CD4-positive, alpha-beta memory T cell (primary cell): ENCODE measurements at regions of chr12 and their contacts with region 1.

Region 1: GRCh38 chr12:64392221-64392620 is 1.7 kb upstream of the C12orf56 start:
- DNase-seq: peak in 2 of 5 donors; percentile 26 to 29
- H3K4me3 ChIP-seq: no peak overlapping the region
- H3K4me3 Mint-ChIP-seq: peak overlapping the region in 4 of 8 donors; percentile 20 to 62 (median 42)
- H3K27ac ChIP-seq: no peak overlapping the region
- H3K27ac Mint-ChIP-seq: no peak overlapping the region
- H3K4me1 ChIP-seq: peaks cover 14% of the 10 kb centered on the region
- H3K4me1 Mint-ChIP-seq: peaks cover 6 to 14% (median 11%) of the 10 kb centered on the region in 4 donors
- H3K27me3 ChIP-seq: no peaks in the 10 kb centered on the region
- H3K27me3 Mint-ChIP-seq: no peaks in the 10 kb centered on the region

Region 2: DNA sequence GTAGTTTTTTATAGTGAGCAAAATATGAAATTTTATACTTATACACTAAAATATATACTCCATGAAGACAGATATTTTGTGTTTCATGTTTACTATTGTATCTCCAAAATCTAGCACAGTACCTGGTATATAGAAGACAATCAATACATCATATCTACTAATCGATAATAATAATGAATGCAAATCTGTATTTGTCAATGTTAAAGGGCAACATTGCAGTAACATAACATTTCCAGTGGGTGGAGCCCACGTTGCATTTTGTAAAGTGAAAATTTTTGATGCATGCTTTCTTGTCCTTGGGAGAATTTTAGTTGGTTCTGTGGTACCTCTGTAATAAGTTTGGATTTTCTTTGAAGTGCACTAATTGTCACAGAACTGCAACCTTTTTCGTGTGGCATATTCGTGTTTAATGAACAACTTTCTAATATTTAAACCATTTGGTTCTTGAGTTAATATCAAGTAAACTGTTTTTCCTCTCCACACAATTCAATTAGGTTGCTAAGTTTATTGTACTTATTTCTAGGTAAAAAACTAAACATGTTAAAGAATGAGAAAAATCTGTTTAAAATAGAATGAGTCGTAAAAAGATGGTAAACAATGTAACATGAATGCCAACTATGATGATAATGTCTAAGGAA is 1288.6 kb before region 1 on chr12:
- CTCF ChIA-PET with region 1: no interaction called
- POLR2A ChIA-PET with region 1: no interaction called
- intact Hi-C with region 1: loop called (anchors 10 kb)
- DNase-seq: peak in 3 of 5 donors; percentile 2 to 11 (median 6)
- H3K4me3 ChIP-seq: no peak overlapping the region
- H3K4me3 Mint-ChIP-seq: no peak overlapping the region
- H3K27ac ChIP-seq: no peak overlapping the region
- H3K27ac Mint-ChIP-seq: no peak overlapping the region
- H3K4me1 ChIP-seq: no peaks in the 10 kb centered on the region
- H3K4me1 Mint-ChIP-seq: no peaks in the 10 kb centered on the region
- H3K27me3 ChIP-seq: no peaks in the 10 kb centered on the region
- H3K27me3 Mint-ChIP-seq: no peaks in the 10 kb centered on the region

Region 3: GRCh38 chr12:63843721-63844390 is 548.4 kb before region 1 on chr12:
- CTCF ChIA-PET with region 1: interaction called, 3 read pairs
- POLR2A ChIA-PET with region 1: no interaction called
- intact Hi-C with region 1: loop called (anchors 1 kb)
- DNase-seq: peak; percentile 61 to 76 (median 73)
- H3K4me3 ChIP-seq: peak overlapping the region; percentile 49 to 66
- H3K4me3 Mint-ChIP-seq: peak overlapping the region in 7 of 8 donors; percentile 35 to 81 (median 67)
- H3K27ac ChIP-seq: no peak overlapping the region
- H3K27ac Mint-ChIP-seq: no peak overlapping the region
- H3K4me1 ChIP-seq: peaks cover 15% of the 10 kb centered on the region
- H3K4me1 Mint-ChIP-seq: peaks cover 7 to 13% (median 10%) of the 10 kb centered on the region in 4 donors
- H3K27me3 ChIP-seq: no peaks in the 10 kb centered on the region
- H3K27me3 Mint-ChIP-seq: peaks cover 14 to 26% of the 10 kb centered on the region in 2 donors

Region 4: GRCh38 chr12:64273527-64274403 is 118.5 kb before region 1 on chr12:
- CTCF ChIA-PET with region 1: interaction called, 6 read pairs
- POLR2A ChIA-PET with region 1: no interaction called
- intact Hi-C with region 1: loop called (anchors 1 kb)
- DNase-seq: peak in 4 of 5 donors; percentile 8 to 19 (median 12)
- H3K4me3 ChIP-seq: no peak overlapping the region
- H3K4me3 Mint-ChIP-seq: no peak overlapping the region
- H3K27ac ChIP-seq: no peak overlapping the region
- H3K27ac Mint-ChIP-seq: peak overlapping the region in 2 of 7 donors; percentile 30 to 37
- H3K4me1 ChIP-seq: no peaks in the 10 kb centered on the region
- H3K4me1 Mint-ChIP-seq: no peaks in the 10 kb centered on the region
- H3K27me3 ChIP-seq: no peaks in the 10 kb centered on the region
- H3K27me3 Mint-ChIP-seq: no peaks in the 10 kb centered on the region

Region 5: DNA sequence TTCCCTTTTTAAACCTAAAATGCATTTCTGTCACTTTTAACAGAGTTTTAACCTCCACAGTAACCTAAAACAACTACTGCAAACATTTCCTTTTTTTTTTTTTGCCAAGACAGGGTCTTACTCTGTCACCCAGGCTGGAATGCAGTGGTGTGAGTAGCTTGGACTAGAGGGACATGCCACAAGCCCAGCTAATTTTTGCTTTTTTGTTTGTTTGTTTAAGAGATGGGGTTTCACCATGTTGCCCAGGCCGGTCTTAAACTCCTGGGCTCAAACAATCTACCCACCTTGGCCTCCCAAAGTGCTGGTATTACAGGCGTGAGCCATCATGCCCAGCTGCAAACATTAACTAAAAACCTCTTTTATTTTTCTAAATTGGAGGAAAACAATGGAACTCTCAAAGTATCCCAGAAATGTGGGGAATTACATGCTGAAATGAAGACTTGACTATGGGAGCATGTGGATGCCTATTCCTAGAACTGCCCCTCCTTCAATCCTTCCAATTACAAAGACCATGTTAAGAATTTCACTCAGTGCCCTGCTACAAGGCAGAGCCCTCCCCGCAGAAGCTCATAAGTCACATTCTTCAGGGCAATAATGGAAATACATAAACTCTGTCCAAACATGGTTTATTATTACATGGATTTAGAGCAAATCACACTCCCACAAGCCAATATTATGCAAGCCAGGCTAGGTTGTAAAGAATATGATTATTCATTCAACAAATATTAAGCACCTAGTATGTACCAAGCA is 68.6 kb before region 1 on chr12:
- CTCF ChIA-PET with region 1: no interaction called
- POLR2A ChIA-PET with region 1: no interaction called
- intact Hi-C with region 1: no loop called
- DNase-seq: no peak
- H3K4me3 ChIP-seq: no peak overlapping the region
- H3K4me3 Mint-ChIP-seq: no peak overlapping the region
- H3K27ac ChIP-seq: no peak overlapping the region
- H3K27ac Mint-ChIP-seq: no peak overlapping the region
- H3K4me1 ChIP-seq: no peaks in the 10 kb centered on the region
- H3K4me1 Mint-ChIP-seq: no peaks in the 10 kb centered on the region
- H3K27me3 ChIP-seq: no peaks in the 10 kb centered on the region
- H3K27me3 Mint-ChIP-seq: peaks cover 0 to 5% of the 10 kb centered on the region in 2 donors

Region 6: DNA sequence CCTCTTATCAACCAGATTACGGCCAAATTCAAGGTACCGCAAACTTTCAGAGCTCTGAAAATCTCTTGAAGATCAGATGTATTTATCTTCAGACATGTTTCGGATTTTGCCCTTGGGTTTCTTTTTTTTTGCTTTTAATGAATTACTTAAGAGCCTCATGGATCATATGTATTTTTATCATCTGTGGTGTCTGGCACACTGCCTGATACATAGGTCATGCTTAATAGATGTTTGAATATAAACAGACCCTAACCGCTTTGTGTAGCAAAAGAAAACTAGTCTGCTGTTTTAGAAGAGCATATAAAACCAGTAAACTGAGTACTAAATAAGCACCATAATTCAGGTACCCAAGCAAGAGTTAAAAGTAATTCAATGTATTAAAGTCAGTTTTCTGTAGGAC is 39.6 kb after region 1 on chr12:
- CTCF ChIA-PET with region 1: no interaction called
- POLR2A ChIA-PET with region 1: no interaction called
- intact Hi-C with region 1: no loop called
- DNase-seq: no peak
- H3K4me3 ChIP-seq: no peak overlapping the region
- H3K4me3 Mint-ChIP-seq: no peak overlapping the region
- H3K27ac ChIP-seq: no peak overlapping the region
- H3K27ac Mint-ChIP-seq: no peak overlapping the region
- H3K4me1 ChIP-seq: no peaks in the 10 kb centered on the region
- H3K4me1 Mint-ChIP-seq: peaks cover 0 to 1% (median 0%) of the 10 kb centered on the region in 4 donors
- H3K27me3 ChIP-seq: no peaks in the 10 kb centered on the region
- H3K27me3 Mint-ChIP-seq: no peaks in the 10 kb centered on the region